Calu3 (cell line): ENCODE measurements at regions of chr1 and their contacts with region 1.

Region 1: DNA sequence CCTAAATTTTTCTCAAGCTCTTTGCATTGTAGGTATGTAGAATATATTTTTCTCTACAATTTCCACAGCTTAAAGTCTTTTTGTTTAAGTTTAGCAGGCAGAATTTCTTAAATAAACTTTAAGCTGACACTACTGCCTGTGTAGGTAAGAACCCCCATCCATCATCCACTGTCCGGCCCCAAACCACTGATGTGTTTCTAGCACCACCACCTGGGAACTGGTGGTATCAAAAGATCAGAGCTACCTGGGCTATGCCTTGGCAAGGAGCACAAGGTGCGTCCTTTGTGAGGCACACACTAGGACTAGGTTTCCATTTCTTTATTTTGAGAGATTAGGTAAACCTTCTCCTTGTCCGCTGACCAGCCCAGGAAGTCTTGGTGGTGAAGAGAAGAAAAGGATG is 10.5 kb upstream of the LELP1 start:
- DNase-seq: peak; percentile 80
- H3K4me3 Mint-ChIP-seq: no peak overlapping the region
- H3K27ac Mint-ChIP-seq: no peak overlapping the region
- H3K4me1 Mint-ChIP-seq: peaks cover 9% of the 10 kb centered on the region
- H3K27me3 Mint-ChIP-seq: peaks cover 51% of the 10 kb centered on the region
- CTCF ChIP-seq: peak; percentile 78

Region 2: DNA sequence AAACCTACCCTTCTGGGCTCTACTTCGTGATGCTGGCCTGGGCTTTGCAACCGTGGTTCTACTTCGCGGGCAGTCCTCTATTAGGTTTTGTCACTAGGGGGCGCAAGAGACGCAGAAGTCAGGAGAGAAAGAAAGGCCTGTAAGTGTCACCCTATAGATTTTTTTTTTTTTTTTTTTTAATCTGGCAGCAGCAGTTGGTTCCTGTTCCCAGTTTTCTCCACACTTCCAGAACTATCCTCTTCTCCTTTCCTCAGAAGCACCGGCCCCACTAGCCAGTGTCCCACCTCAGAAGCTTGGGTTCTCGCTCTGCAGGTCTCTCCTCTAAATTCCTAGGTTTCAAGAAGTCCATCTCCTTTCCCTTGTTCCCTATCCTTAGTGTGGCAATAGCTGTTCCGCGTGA is 538.6 kb before region 1 on chr1:
- CTCF ChIA-PET with region 1: interaction called, 4 read pairs
- intact Hi-C with region 1: loop called (anchors 10 kb)
- DNase-seq: peak; percentile 82
- H3K4me3 Mint-ChIP-seq: no peak overlapping the region
- H3K27ac Mint-ChIP-seq: no peak overlapping the region
- H3K4me1 Mint-ChIP-seq: no peaks in the 10 kb centered on the region
- H3K27me3 Mint-ChIP-seq: peaks cover 66% of the 10 kb centered on the region
- CTCF ChIP-seq: peak; percentile 87

Region 3: DNA sequence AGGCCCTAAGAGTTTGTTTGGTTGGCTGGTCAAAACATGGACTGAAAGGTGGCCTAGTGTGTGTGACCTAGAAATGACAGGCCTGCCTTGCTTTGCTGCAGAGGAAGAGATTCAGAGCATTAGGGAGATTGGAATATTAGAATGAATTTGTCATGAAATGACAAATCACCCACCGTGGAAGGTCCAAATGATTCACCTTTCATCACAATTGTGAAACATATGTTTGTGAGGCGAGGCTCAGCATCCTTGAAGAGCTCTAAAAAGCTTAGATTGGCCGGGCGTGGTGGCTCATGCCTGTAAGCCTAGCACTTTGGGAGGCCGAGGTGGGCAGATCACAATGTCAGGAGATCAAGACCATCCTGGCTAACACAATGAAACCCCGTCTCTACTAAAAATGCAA is 375.4 kb before region 1 on chr1:
- CTCF ChIA-PET with region 1: no interaction called
- intact Hi-C with region 1: no loop called
- DNase-seq: no peak
- H3K4me3 Mint-ChIP-seq: no peak overlapping the region
- H3K27ac Mint-ChIP-seq: no peak overlapping the region
- H3K4me1 Mint-ChIP-seq: no peaks in the 10 kb centered on the region
- H3K27me3 Mint-ChIP-seq: peaks cover 50% of the 10 kb centered on the region
- CTCF ChIP-seq: no peak

Region 4: GRCh38 chr1:152878042-152878441 is 314.7 kb before region 1 on chr1 and contains the start of gene SMCP:
- CTCF ChIA-PET with region 1: interaction called, 76 read pairs
- intact Hi-C with region 1: no loop called
- DNase-seq: no peak
- H3K4me3 Mint-ChIP-seq: no peak within 1 kb of the TSS
- H3K27ac Mint-ChIP-seq: no peak within 1 kb of the TSS
- H3K4me1 Mint-ChIP-seq: no peaks in the 10 kb centered on the region
- H3K27me3 Mint-ChIP-seq: no peaks in the 10 kb centered on the region
- CTCF ChIP-seq: peak; percentile 25
- total RNA-seq, gene SMCP: not detected in 2 replicates

Region 5: DNA sequence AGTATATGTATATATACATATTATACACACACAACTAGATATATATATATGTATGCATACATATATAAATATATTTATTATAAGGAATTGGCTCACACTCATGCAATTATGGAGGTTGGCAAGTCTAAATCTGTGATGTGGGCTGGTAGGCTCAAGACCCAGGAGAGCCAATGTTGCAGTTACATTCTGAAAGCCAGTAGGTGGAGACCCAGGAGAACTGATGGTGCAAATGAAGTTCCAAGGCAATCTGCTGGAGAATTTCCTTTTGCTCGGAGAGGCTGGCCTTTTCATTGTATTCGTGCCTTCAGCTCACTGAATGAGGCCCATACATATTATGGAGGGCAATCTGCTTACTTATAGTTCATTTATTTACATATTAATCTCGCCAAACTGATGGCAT is 274.9 kb before region 1 on chr1:
- CTCF ChIA-PET with region 1: interaction called, 30 read pairs
- intact Hi-C with region 1: loop called (anchors 1 kb)
- DNase-seq: peak; percentile 57
- H3K4me3 Mint-ChIP-seq: no peak overlapping the region
- H3K27ac Mint-ChIP-seq: no peak overlapping the region
- H3K4me1 Mint-ChIP-seq: peaks cover 9% of the 10 kb centered on the region
- H3K27me3 Mint-ChIP-seq: no peaks in the 10 kb centered on the region
- CTCF ChIP-seq: peak; percentile 85

Region 6: DNA sequence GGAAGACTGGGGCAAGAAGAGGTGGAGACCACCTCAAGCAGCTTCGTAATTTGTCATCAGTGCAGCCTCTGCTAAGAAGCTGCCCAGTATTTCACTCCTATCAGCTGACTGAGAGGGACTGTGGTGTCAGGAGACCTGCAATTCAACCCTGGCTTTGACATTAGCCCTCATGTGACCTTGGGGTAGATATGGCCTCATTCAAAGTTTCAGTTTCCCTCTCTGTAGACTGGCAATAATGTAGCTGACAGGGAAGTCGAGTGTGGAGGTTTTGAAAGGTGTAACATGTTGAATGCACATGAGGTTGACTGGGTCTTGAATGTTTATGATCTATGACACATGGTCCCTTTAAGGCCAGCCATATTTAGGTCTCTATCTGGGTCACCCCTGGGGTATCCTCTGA is 224.4 kb before region 1 on chr1:
- CTCF ChIA-PET with region 1: interaction called, 10 read pairs
- intact Hi-C with region 1: no loop called
- DNase-seq: no peak
- H3K4me3 Mint-ChIP-seq: no peak overlapping the region
- H3K27ac Mint-ChIP-seq: no peak overlapping the region
- H3K4me1 Mint-ChIP-seq: peaks cover 13% of the 10 kb centered on the region
- H3K27me3 Mint-ChIP-seq: no peaks in the 10 kb centered on the region
- CTCF ChIP-seq: no peak

Region 7: GRCh38 chr1:153100236-153100635 is 92.5 kb before region 1 on chr1:
- CTCF ChIA-PET with region 1: no interaction called
- intact Hi-C with region 1: loop called (anchors 5 kb)
- DNase-seq: peak; percentile 80
- H3K4me3 Mint-ChIP-seq: no peak overlapping the region
- H3K27ac Mint-ChIP-seq: peak overlapping the region; percentile 94
- H3K4me1 Mint-ChIP-seq: peaks cover 59% of the 10 kb centered on the region
- H3K27me3 Mint-ChIP-seq: no peaks in the 10 kb centered on the region
- CTCF ChIP-seq: no peak